ENCODE measurements at regions of chr10 and their contacts with region 1.

Region 1: DNA sequence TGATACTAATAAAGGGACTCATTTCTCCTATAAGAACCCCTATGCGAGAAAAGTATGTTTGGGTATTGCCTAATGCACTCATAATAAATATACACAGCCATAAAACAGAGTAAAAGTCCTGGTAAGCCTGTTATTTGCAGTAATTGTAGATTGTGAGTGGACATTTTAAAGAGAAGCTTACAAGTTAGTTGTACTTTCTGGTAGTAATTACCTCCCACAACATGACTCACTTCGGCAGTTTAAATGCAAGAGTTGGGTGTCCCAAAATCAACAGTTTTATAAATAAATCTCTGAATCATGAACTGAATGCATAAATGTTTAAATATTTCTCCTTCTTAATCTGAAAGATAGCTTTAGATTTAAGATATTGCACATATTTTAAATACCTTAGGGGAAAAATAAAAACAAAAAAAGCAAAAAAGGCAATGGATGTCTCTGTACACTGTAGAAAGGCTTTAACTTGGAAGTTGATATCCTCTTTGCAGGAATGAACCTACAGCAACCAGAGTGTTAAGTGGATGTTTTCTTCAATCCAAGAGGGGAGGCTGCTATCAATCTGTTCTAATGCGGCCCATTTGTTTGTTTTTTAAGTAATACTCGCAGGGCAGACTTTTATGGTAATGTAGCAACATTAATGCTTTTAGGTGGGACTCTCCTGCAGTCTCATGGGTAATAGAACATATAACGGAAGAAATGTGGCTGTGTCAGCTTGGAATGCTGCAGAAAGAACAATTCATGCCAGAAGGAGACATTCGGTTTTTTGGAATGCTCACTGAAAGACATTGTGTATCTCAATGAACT is 57.3 kb upstream of the ZEB1 start:
- DNase-seq: no peak
- ATAC-seq: peak; percentile 74
- H3K4me3 ChIP-seq: peak overlapping the region; percentile 11 to 76
- H3K27ac ChIP-seq: peak overlapping the region; percentile 71 to 90
- H3K4me1 ChIP-seq: peaks cover 1 to 3% of the 10 kb centered on the region in 2 donors
- H3K27me3 ChIP-seq: no peaks in the 10 kb centered on the region

Region 2: GRCh38 chr10:30404540-30404939 is 857.2 kb before region 1 on chr10:
- intact Hi-C with region 1: no loop called
- DNase-seq: no peak
- ATAC-seq: no peak
- H3K4me3 ChIP-seq: no peak overlapping the region
- H3K27ac ChIP-seq: no peak overlapping the region
- H3K4me1 ChIP-seq: no peaks in the 10 kb centered on the region
- H3K27me3 ChIP-seq: no peaks in the 10 kb centered on the region

Region 3: DNA sequence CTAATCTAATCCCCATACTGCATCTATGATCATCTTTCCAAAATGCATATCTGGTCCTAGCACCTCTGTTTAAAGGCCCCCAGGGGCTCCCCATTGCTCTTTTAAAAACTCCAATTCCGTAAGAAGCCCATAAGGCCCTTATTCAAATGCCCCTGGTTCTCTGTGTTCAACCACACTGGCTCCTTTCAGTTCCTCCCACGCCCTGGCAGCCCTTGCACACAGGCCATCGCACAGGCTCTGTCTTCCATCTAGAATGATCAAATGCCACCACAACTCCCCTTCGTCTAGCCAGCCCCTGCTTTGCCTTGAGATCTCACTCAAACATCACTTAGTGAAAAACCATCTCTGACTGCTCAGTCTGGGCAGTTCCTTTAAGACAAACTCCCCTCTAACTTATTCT is 519.2 kb before region 1 on chr10:
- intact Hi-C with region 1: no loop called
- DNase-seq: no peak
- ATAC-seq: no peak
- H3K4me3 ChIP-seq: no peak overlapping the region
- H3K27ac ChIP-seq: no peak overlapping the region
- H3K4me1 ChIP-seq: no peaks in the 10 kb centered on the region
- H3K27me3 ChIP-seq: no peaks in the 10 kb centered on the region

Region 4: GRCh38 chr10:31133628-31134302 is 127.9 kb before region 1 on chr10:
- intact Hi-C with region 1: loop called in 1 of 2 experiments (anchors 10 kb)
- DNase-seq: peak; percentile 88 to 95
- ATAC-seq: peak; percentile 89
- H3K4me3 ChIP-seq: peak overlapping the region; percentile 3 to 75
- H3K27ac ChIP-seq: peak overlapping the region; percentile 87 to 97
- H3K4me1 ChIP-seq: peaks cover 0 to 4% of the 10 kb centered on the region in 2 donors
- H3K27me3 ChIP-seq: no peaks in the 10 kb centered on the region

Measured in aorta (tissue), 5 donors.